ENCODE measurements at regions of chrX and their contacts with region 1.

Region 1: GRCh38 chrX:45515262-45516215 is 314.9 kb upstream of the DIPK2B start:
- DNase-seq: peak in 4 of 5 donors; percentile 26 to 39 (median 34)
- H3K4me3 ChIP-seq: no peak overlapping the region
- H3K4me3 Mint-ChIP-seq: no peak overlapping the region
- H3K27ac ChIP-seq: no peak overlapping the region
- H3K27ac Mint-ChIP-seq: no peak overlapping the region
- H3K4me1 ChIP-seq: peaks cover 7% of the 10 kb centered on the region
- H3K4me1 Mint-ChIP-seq: peaks cover 2 to 7% (median 6%) of the 10 kb centered on the region in 4 donors
- H3K27me3 ChIP-seq: no peaks in the 10 kb centered on the region
- H3K27me3 Mint-ChIP-seq: no peaks in the 10 kb centered on the region

Region 2: DNA sequence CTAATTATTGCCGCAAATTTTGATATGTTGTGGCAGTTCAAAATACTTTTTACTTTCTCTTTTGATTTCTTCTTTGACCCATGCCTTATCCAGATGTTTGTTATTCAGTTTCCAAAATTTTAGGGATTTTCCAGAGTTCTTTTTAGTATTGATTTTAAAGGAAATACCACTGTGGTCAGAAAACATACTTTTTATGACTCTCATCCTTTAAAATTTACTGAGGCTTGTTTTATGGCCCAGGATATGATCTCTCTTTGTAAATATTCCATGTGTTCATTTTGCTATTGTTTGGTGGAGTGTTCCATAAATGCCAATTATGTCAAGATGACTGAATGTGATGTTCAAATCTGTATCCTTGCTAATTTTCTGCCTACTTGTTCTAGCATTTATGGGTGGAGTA is 42.6 kb before region 1 on chrX:
- CTCF ChIA-PET with region 1: no interaction called
- POLR2A ChIA-PET with region 1: no interaction called
- intact Hi-C with region 1: no loop called
- DNase-seq: no peak
- H3K4me3 ChIP-seq: no peak overlapping the region
- H3K4me3 Mint-ChIP-seq: no peak overlapping the region
- H3K27ac ChIP-seq: no peak overlapping the region
- H3K27ac Mint-ChIP-seq: no peak overlapping the region
- H3K4me1 ChIP-seq: no peaks in the 10 kb centered on the region
- H3K4me1 Mint-ChIP-seq: no peaks in the 10 kb centered on the region
- H3K27me3 ChIP-seq: no peaks in the 10 kb centered on the region
- H3K27me3 Mint-ChIP-seq: peaks cover 0 to 5% of the 10 kb centered on the region in 2 donors

Region 3: GRCh38 chrX:45749375-45749774 is 233.8 kb after region 1 on chrX:
- CTCF ChIA-PET with region 1: interaction called, 6 read pairs
- POLR2A ChIA-PET with region 1: no interaction called
- intact Hi-C with region 1: loop called (anchors 1 kb)
- DNase-seq: peak in 1 of 5 donors; percentile 15
- H3K4me3 ChIP-seq: no peak overlapping the region
- H3K4me3 Mint-ChIP-seq: no peak overlapping the region
- H3K27ac ChIP-seq: no peak overlapping the region
- H3K27ac Mint-ChIP-seq: peak overlapping the region in 4 of 7 donors; percentile 0 to 61 (median 22)
- H3K4me1 ChIP-seq: peaks cover 55% of the 10 kb centered on the region
- H3K4me1 Mint-ChIP-seq: peaks cover 5 to 21% (median 10%) of the 10 kb centered on the region in 4 donors
- H3K27me3 ChIP-seq: no peaks in the 10 kb centered on the region
- H3K27me3 Mint-ChIP-seq: no peaks in the 10 kb centered on the region

Region 4: DNA sequence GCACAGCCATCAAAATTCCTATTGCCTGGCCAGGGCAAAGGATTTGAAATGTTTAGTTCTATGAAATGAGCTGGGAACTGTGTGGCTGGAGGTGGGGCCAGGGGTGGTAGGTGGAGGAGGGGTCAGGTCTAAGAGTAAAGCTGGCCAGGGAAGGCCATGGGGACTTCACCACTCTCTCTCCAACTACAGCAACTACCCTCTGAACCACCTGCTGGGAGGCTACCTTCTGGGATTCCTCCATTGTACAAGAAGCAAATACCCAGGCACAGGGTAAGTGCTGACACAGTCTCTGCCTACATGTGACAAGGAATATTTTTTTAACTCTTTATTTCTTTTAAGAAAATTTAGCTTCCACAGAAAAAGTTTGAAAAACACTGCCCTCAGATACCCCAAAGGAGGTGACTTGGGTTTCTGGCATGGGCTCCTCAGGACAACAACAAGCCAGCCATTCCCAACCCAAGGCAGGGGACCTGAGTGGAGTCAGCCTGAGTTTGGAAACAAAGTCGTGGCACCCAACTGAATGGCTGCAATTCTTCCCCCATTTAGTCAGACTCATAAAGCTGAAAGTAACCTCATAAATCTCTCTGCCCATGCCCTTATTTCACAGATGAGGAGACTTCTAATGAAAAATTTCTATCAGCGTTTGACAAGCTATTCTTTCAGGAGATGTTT is 278.9 kb after region 1 on chrX:
- CTCF ChIA-PET with region 1: interaction called, 3 read pairs
- POLR2A ChIA-PET with region 1: no interaction called
- intact Hi-C with region 1: loop called (anchors 5 kb)
- DNase-seq: no peak
- H3K4me3 ChIP-seq: no peak overlapping the region
- H3K4me3 Mint-ChIP-seq: peak overlapping the region in 1 of 8 donors; percentile 4
- H3K27ac ChIP-seq: no peak overlapping the region
- H3K27ac Mint-ChIP-seq: peak overlapping the region in 3 of 7 donors; percentile 39 to 47 (median 43)
- H3K4me1 ChIP-seq: peaks cover 48% of the 10 kb centered on the region
- H3K4me1 Mint-ChIP-seq: peaks cover 24 to 65% (median 39%) of the 10 kb centered on the region in 4 donors
- H3K27me3 ChIP-seq: no peaks in the 10 kb centered on the region
- H3K27me3 Mint-ChIP-seq: no peaks in the 10 kb centered on the region

Region 5: DNA sequence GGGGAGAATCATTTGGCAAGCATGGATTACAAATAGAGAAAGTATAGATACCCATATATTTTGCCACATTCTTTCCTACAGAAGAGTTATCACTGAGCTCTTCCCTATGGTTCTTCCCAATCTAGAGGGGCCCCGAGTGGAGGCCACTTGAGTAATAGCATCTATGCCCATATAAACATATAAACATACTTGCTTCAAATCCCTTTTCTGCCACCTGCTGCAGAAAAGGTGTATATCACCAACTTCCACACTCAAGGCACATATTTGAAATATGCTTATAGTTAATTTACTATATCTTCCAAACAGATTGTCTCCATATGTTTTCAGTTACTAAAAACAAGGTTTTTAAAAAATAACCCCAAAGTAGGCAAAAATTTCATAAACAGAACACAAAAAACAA is 328.0 kb after region 1 on chrX:
- CTCF ChIA-PET with region 1: interaction called, 28 read pairs
- POLR2A ChIA-PET with region 1: no interaction called
- intact Hi-C with region 1: no loop called
- DNase-seq: peak in 4 of 5 donors; percentile 14 to 24 (median 21)
- H3K4me3 ChIP-seq: no peak overlapping the region
- H3K4me3 Mint-ChIP-seq: peak overlapping the region in 1 of 8 donors; percentile 7
- H3K27ac ChIP-seq: no peak overlapping the region
- H3K27ac Mint-ChIP-seq: peak overlapping the region in 5 of 7 donors; percentile 2 to 48 (median 28)
- H3K4me1 ChIP-seq: peaks cover 24% of the 10 kb centered on the region
- H3K4me1 Mint-ChIP-seq: peaks cover 11 to 33% (median 23%) of the 10 kb centered on the region in 4 donors
- H3K27me3 ChIP-seq: no peaks in the 10 kb centered on the region
- H3K27me3 Mint-ChIP-seq: no peaks in the 10 kb centered on the region

Region 6: GRCh38 chrX:46376246-46376885 is 860.8 kb after region 1 on chrX:
- CTCF ChIA-PET with region 1: interaction called, 15 read pairs
- POLR2A ChIA-PET with region 1: no interaction called
- intact Hi-C with region 1: no loop called
- DNase-seq: peak in 4 of 5 donors; percentile 17 to 38 (median 32)
- H3K4me3 ChIP-seq: no peak overlapping the region
- H3K4me3 Mint-ChIP-seq: no peak overlapping the region
- H3K27ac ChIP-seq: no peak overlapping the region
- H3K27ac Mint-ChIP-seq: no peak overlapping the region
- H3K4me1 ChIP-seq: no peaks in the 10 kb centered on the region
- H3K4me1 Mint-ChIP-seq: no peaks in the 10 kb centered on the region
- H3K27me3 ChIP-seq: no peaks in the 10 kb centered on the region
- H3K27me3 Mint-ChIP-seq: no peaks in the 10 kb centered on the region

Region 7: GRCh38 chrX:46408553-46409407 is 893.2 kb after region 1 on chrX:
- CTCF ChIA-PET with region 1: interaction called, 14 read pairs
- POLR2A ChIA-PET with region 1: no interaction called
- intact Hi-C with region 1: loop called (anchors 2 kb)
- DNase-seq: peak; percentile 44 to 55 (median 45)
- H3K4me3 ChIP-seq: no peak overlapping the region
- H3K4me3 Mint-ChIP-seq: no peak overlapping the region
- H3K27ac ChIP-seq: no peak overlapping the region
- H3K27ac Mint-ChIP-seq: no peak overlapping the region
- H3K4me1 ChIP-seq: no peaks in the 10 kb centered on the region
- H3K4me1 Mint-ChIP-seq: peaks cover 0 to 4% (median 0%) of the 10 kb centered on the region in 4 donors
- H3K27me3 ChIP-seq: no peaks in the 10 kb centered on the region
- H3K27me3 Mint-ChIP-seq: no peaks in the 10 kb centered on the region